Sciatic nerve (tissue), 2 donors: ENCODE measurements at regions of chr1 and their contacts with region 1.

Region 1: GRCh38 chr1:5165762-5166161 is 511.4 kb downstream of the AJAP1 start:
- DNase-seq: no peak
- ATAC-seq: no peak

Region 2: GRCh38 chr1:3968851-3969250 is 1196.9 kb before region 1 on chr1:
- intact Hi-C with region 1: loop called (anchors 10 kb)
- DNase-seq: no peak
- ATAC-seq: no peak

Region 3: GRCh38 chr1:4736254-4736653 is 429.5 kb before region 1 on chr1:
- intact Hi-C with region 1: no loop called
- DNase-seq: no peak
- ATAC-seq: no peak